Prostate gland (tissue), 2 donors: ENCODE measurements at regions of chr12 and their contacts with region 1.

Region 1: GRCh38 chr12:42237052-42237852 is 796 bp downstream of the YAF2 start:
- DNase-seq: peak; percentile 70
- H3K4me3 ChIP-seq: peak overlapping the region; percentile 79 to 84
- H3K27ac ChIP-seq: peak overlapping the region; percentile 86 to 92
- H3K4me1 ChIP-seq: no peaks in the 10 kb centered on the region
- H3K27me3 ChIP-seq: no peaks in the 10 kb centered on the region
- CTCF ChIP-seq: peak in 2 of 4 experiments; percentile 39 to 53
- POLR2A ChIP-seq: peak; percentile 36

Region 2: GRCh38 chr12:42144408-42145196 is 92.7 kb before region 1 on chr12 and contains the start of gene GXYLT1:
- intact Hi-C with region 1: loop called (anchors 5 kb)
- DNase-seq: peak; percentile 90
- H3K4me3 ChIP-seq: peak within 1 kb of the TSS; percentile 78 to 93
- H3K27ac ChIP-seq: peak within 1 kb of the TSS; percentile 78 to 91
- H3K4me1 ChIP-seq: no peaks in the 10 kb centered on the region
- H3K27me3 ChIP-seq: no peaks in the 10 kb centered on the region
- CTCF ChIP-seq: peak in 1 of 4 experiments; percentile 19
- POLR2A ChIP-seq: peak; percentile 88
- total RNA-seq, gene GXYLT1: 15.7 to 18.0 TPM

Region 3: GRCh38 chr12:42325653-42326474 is 88.6 kb after region 1 on chr12 and contains the starts of genes PPHLN1 and ZCRB1:
- intact Hi-C with region 1: loop called (anchors 5 kb)
- DNase-seq: peak; percentile 84
- H3K4me3 ChIP-seq: peak within 1 kb of the TSS; percentile 50 to 51
- H3K27ac ChIP-seq: peak within 1 kb of the TSS; percentile 83 to 87
- H3K4me1 ChIP-seq: peaks cover 8% of the 10 kb centered on the region
- H3K27me3 ChIP-seq: no peaks in the 10 kb centered on the region
- CTCF ChIP-seq: peak in 2 of 4 experiments; percentile 9 to 16
- POLR2A ChIP-seq: peak; percentile 56
- total RNA-seq, gene PPHLN1: 52.1 to 54.7 TPM
- total RNA-seq, gene ZCRB1: 31.4 to 49.7 TPM

Region 4: DNA sequence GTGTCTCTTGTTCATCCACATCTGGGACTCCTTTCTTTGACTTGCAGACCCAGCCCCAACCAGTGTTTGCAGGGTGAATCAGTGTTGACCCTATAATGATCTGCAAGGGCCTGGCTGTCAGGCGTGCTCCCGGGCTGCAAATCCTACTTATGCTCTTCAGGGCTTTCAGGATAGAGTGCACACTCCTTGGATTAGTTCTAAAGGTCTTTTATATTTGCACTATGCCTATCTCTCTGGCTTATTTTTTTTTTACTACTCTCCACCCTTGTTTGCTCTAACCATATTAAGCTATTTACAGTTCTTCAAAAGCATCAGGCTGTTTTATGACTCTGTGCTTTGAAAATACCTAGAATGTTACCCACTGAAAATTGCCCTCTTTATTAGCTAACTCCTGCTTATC is 356.6 kb after region 1 on chr12:
- intact Hi-C with region 1: no loop called
- DNase-seq: no peak
- H3K4me3 ChIP-seq: no peak overlapping the region
- H3K27ac ChIP-seq: no peak overlapping the region
- H3K4me1 ChIP-seq: no peaks in the 10 kb centered on the region
- H3K27me3 ChIP-seq: peaks cover 2% of the 10 kb centered on the region
- CTCF ChIP-seq: no peak
- POLR2A ChIP-seq: no peak